ENCODE measurements at regions of chr2 and their contacts with region 1.

Region 1: DNA sequence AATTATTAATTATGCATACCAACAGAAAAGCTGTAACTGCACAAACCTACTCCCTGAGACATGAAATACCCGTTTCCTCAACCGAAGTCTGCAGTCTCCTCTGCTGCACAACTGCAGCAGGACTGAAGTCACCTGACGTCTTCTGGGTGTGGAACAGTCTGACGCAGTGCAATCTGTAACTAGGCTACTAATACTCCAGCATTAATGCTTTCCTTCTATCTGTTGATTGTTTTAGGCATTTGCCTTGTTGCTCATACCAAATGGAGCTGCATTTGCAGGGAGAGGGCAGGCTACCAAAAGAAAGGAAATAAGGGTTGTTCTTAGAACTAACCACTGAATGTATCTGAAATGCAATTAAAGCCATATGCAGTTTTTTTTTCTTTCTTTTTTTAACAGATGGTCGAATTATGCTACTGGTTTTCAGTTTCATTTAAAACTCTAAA is 40.1 kb downstream of the RTN4 start:
- DNase-seq: peak; percentile 60
- ATAC-seq: peak; percentile 93
- H3K4me3 ChIP-seq: peak overlapping the region; percentile 57
- H3K27ac ChIP-seq: peak overlapping the region; percentile 45
- H3K4me1 ChIP-seq: peaks cover 15% of the 10 kb centered on the region; the same call in 1 of the 2 replicates
- H3K27me3 ChIP-seq: no peaks in the 10 kb centered on the region
- CTCF ChIP-seq: no peak
- EP300 ChIP-seq: no peak
- POLR2A ChIP-seq: peak; percentile 53; the same call in 1 of the 2 replicates
- RAD21 ChIP-seq: no peak

Region 2: GRCh38 chr2:54763636-54764291 is 246.4 kb before region 1 on chr2:
- CTCF ChIA-PET with region 1: interaction called, 11 read pairs
- POLR2A ChIA-PET with region 1: no interaction called
- RAD21 ChIA-PET with region 1: interaction called, 3 read pairs
- SMC1A ChIA-PET with region 1: no interaction called
- in situ Hi-C with region 1: no loop called
- intact Hi-C with region 1: loop called (anchors 5 kb)
- DNase-seq: no peak
- ATAC-seq: peak; percentile 83
- H3K4me3 ChIP-seq: no peak overlapping the region
- H3K27ac ChIP-seq: no peak overlapping the region
- H3K4me1 ChIP-seq: peaks cover 1% of the 10 kb centered on the region
- H3K27me3 ChIP-seq: no peaks in the 10 kb centered on the region; a peak in 2 of 4 replicates
- CTCF ChIP-seq: peak; percentile 50 to 71 (median 61)
- EP300 ChIP-seq: no peak
- POLR2A ChIP-seq: no peak
- RAD21 ChIP-seq: peak; percentile 49

Region 3: DNA sequence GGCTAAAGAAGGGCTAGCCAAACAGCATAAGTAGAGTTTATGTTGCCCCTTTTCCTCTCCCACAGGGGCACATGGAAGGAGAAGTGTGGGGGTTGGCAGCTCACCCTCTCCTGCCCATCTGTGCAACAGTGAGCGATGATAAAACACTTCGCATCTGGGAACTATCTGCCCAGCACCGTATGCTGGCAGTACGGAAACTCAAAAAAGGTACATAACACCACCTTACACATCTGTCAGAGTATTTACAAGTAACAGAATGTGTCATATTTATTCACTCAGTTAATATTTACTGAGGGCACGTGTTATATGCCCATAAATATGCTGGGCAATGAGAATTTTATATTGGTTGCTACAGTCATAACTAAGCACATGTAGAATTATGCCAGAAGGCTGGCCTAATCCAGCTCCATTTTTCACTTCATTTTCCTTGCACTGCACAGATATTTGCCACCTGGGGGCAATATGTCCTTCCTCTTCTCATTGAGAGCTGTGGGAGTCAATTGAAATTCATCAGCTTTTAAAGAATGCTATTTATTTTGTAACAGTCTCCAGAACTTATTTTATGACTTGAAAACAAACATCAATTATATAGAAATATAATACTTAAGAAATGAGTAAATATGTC is 110.5 kb before region 1 on chr2:
- CTCF ChIA-PET with region 1: interaction called, 125 read pairs
- POLR2A ChIA-PET with region 1: no interaction called
- RAD21 ChIA-PET with region 1: interaction called, 65 read pairs
- SMC1A ChIA-PET with region 1: interaction called, 81 read pairs
- in situ Hi-C with region 1: no loop called
- intact Hi-C with region 1: loop called (anchors 2 kb)
- DNase-seq: peak; percentile 4
- ATAC-seq: peak; percentile 68
- H3K4me3 ChIP-seq: no peak overlapping the region
- H3K27ac ChIP-seq: no peak overlapping the region
- H3K4me1 ChIP-seq: no peaks in the 10 kb centered on the region
- H3K27me3 ChIP-seq: no peaks in the 10 kb centered on the region
- CTCF ChIP-seq: peak; percentile 39 to 64 (median 55); a peak in 5 of 6 replicates
- EP300 ChIP-seq: no peak
- POLR2A ChIP-seq: no peak
- RAD21 ChIP-seq: peak; percentile 92

Region 4: GRCh38 chr2:54999182-54999581 is 11.0 kb before region 1 on chr2:
- CTCF ChIA-PET with region 1: interaction called, 9 read pairs
- POLR2A ChIA-PET with region 1: interaction called, 5 read pairs
- RAD21 ChIA-PET with region 1: interaction called, 18 read pairs
- SMC1A ChIA-PET with region 1: interaction called, 19 read pairs
- in situ Hi-C with region 1: no loop called
- intact Hi-C with region 1: no loop called
- DNase-seq: no peak
- ATAC-seq: peak; percentile 61
- H3K4me3 ChIP-seq: peak overlapping the region; percentile 45; the same call in 1 of the 2 replicates
- H3K27ac ChIP-seq: peak overlapping the region; percentile 1; the same call in 1 of the 2 replicates
- H3K4me1 ChIP-seq: peaks cover 18% of the 10 kb centered on the region; the same call in 1 of the 2 replicates
- H3K27me3 ChIP-seq: no peaks in the 10 kb centered on the region
- CTCF ChIP-seq: no peak
- EP300 ChIP-seq: 0 out of 4 replicates have a peak, but pooled peaks of 1 of the 2 experiments have one; percentile 10
- POLR2A ChIP-seq: no peak
- RAD21 ChIP-seq: no peak

Region 5: GRCh38 chr2:55175254-55176025 is 165.3 kb after region 1 on chr2:
- CTCF ChIA-PET with region 1: interaction called, 342 read pairs
- POLR2A ChIA-PET with region 1: no interaction called
- RAD21 ChIA-PET with region 1: interaction called, 49 read pairs
- SMC1A ChIA-PET with region 1: interaction called, 260 read pairs
- in situ Hi-C with region 1: no loop called
- intact Hi-C with region 1: no loop called
- DNase-seq: no peak
- ATAC-seq: peak; percentile 86
- H3K4me3 ChIP-seq: no peak overlapping the region
- H3K27ac ChIP-seq: no peak overlapping the region
- H3K4me1 ChIP-seq: no peaks in the 10 kb centered on the region
- H3K27me3 ChIP-seq: no peaks in the 10 kb centered on the region
- CTCF ChIP-seq: peak; percentile 39 to 68 (median 56); a peak in 4 of 6 replicates
- EP300 ChIP-seq: no peak
- POLR2A ChIP-seq: no peak
- RAD21 ChIP-seq: peak; percentile 82